BJ (cell line): ENCODE measurements at regions of chr6 and their contacts with region 1.

Region 1: GRCh38 chr6:139375232-139376016 is 976 bp upstream of the CITED2 start:
- DNase-seq: peak; percentile 91
- H3K4me3 ChIP-seq: peak overlapping the region; percentile 70
- H3K27me3 ChIP-seq: no peaks in the 10 kb centered on the region
- CTCF ChIP-seq: peak; percentile 27; the same call in 1 of the 2 replicates

Region 2: GRCh38 chr6:139508023-139508422 is 132.6 kb after region 1 on chr6:
- CTCF ChIA-PET with region 1: no interaction called
- POLR2A ChIA-PET with region 1: no interaction called
- DNase-seq: no peak
- H3K4me3 ChIP-seq: no peak overlapping the region
- H3K27me3 ChIP-seq: no peaks in the 10 kb centered on the region
- CTCF ChIP-seq: no peak

Region 3: DNA sequence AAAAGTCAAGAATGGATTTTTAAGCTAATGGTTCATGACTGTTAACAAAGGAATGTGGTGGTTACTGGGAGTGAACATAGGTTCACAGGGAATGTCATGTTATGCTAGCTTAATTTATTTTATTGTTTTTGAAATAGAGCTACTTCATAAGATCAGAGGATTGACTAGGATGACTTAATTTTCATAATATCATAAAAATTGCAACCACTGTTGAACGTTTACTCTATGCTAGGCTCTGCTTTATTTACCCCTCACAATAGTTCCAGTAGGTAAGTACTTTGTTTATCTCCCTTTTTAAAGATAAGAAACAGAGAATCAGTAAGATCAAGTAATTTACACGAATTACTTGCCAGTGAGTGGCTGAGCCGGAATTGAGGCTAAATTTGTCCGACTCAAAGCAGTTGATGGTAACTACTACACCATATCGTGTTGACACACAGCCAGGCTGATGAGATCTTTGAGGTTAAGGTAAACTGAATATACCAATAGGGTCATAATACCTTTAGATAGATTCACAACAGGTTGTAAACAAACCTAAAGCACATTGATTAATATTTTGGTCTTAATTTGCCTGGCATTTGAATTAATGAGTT is 193.6 kb after region 1 on chr6:
- CTCF ChIA-PET with region 1: no interaction called
- POLR2A ChIA-PET with region 1: interaction called, 10 read pairs
- DNase-seq: peak; percentile 60
- H3K4me3 ChIP-seq: no peak overlapping the region
- H3K27me3 ChIP-seq: no peaks in the 10 kb centered on the region
- CTCF ChIP-seq: no peak

Region 4: DNA sequence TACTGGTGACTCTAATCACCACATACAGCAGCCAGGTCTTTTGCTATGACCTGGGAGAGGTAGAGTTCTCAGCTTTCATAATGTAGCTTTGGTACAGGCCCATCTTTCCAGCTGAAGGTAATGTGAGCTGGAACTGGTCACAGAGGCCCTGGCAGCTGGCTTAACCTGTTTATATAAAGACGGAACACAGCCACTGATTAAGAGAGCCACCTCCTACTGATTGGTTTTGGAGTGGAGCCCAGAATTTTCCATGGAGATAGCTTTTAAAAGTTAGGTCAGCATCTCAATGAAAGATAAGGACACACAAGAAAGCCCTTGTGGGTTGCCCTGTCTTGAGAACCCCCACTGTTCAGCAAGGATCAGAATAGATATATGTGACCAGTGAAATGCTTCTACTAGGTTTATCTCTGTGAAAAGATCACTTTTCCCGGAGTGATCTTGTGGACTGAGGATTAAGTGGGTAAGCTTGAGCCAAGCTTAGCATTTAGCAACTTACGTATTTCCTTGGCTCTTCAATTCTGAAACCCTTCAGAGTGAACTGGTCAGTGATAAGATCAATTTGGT is 212.7 kb after region 1 on chr6:
- CTCF ChIA-PET with region 1: no interaction called
- POLR2A ChIA-PET with region 1: interaction called, 26 read pairs
- DNase-seq: no peak
- H3K4me3 ChIP-seq: no peak overlapping the region
- H3K27me3 ChIP-seq: no peaks in the 10 kb centered on the region
- CTCF ChIP-seq: no peak

Region 5: GRCh38 chr6:139698526-139699176 is 323.2 kb after region 1 on chr6:
- CTCF ChIA-PET with region 1: no interaction called
- POLR2A ChIA-PET with region 1: interaction called, 10 read pairs
- DNase-seq: no peak
- H3K4me3 ChIP-seq: no peak overlapping the region
- H3K27me3 ChIP-seq: no peaks in the 10 kb centered on the region
- CTCF ChIP-seq: no peak

Region 6: DNA sequence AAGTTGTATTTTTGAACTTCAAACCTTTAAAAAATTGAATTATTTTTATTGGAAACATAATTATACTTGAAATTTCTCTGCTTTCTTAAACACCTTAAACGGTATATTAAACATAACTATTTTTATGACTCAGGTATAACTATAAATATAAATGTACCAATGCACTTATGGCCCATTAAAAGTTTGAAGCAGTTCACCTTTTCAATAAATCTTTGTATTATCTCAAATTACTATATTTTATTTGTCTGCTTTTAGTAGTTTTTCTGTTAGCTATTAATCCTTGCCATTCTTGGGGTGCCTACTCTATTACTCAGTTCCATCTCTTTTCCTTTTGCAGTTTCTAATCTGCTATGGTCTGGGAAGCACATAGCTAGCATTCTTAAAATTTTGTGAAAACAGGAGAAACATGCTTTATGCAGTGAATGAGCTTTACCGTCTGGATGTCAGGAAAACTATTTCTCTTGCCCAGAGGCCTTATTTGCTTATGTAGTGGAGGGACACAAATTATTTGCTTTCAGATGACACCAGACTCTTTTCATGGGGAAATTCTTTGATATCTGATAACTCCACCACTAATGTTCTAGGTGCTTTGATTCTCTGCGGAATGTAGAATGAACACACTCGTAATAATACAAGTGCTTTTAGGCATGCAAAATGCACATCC is 377.9 kb after region 1 on chr6:
- CTCF ChIA-PET with region 1: interaction called, 3 read pairs
- POLR2A ChIA-PET with region 1: interaction called, 49 read pairs
- DNase-seq: no peak
- H3K4me3 ChIP-seq: no peak overlapping the region
- H3K27me3 ChIP-seq: no peaks in the 10 kb centered on the region
- CTCF ChIP-seq: no peak

Region 7: GRCh38 chr6:139855671-139856311 is 480.4 kb after region 1 on chr6:
- CTCF ChIA-PET with region 1: no interaction called
- POLR2A ChIA-PET with region 1: interaction called, 19 read pairs
- DNase-seq: peak; percentile 52
- H3K4me3 ChIP-seq: no peak overlapping the region
- H3K27me3 ChIP-seq: no peaks in the 10 kb centered on the region
- CTCF ChIP-seq: no peak